Calu3 (cell line): ENCODE measurements at regions of chr18 and their contacts with region 1.

Region 1: GRCh38 chr18:5339202-5339834 is 43.8 kb upstream of the ZBTB14 start:
- DNase-seq: no peak
- H3K4me3 Mint-ChIP-seq: no peak overlapping the region
- H3K27ac Mint-ChIP-seq: no peak overlapping the region
- H3K4me1 Mint-ChIP-seq: no peaks in the 10 kb centered on the region
- H3K27me3 Mint-ChIP-seq: no peaks in the 10 kb centered on the region
- CTCF ChIP-seq: no peak

Region 2: DNA sequence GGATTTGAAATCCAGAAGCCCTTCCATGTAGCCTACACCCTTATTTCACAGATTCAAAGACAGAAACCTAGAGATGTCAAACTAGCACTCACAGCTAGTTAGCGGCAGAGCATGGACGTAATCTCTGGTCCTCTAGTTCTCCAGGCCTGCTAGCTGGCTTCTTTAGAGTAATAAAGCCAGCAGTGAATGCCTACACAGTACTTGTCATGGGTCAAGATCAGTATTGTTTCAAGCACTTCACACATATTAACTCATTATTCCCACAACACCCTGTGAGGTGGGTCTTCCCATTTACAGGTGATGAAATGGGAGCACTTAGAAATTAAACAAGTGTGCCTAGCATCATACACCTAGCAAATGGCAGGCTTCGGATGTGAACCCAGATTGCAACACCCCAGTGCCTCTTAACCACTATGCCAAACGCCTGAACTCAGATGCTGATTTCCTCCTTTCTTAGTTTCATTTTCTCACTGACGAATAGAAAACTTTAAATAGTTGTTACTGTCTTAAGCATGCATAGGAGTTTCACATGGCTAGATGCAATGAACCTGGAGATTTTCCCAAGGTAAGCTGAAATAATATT is 29.3 kb before region 1 on chr18:
- CTCF ChIA-PET with region 1: no interaction called
- intact Hi-C with region 1: loop called (anchors 1 kb)
- DNase-seq: no peak
- H3K4me3 Mint-ChIP-seq: no peak overlapping the region
- H3K27ac Mint-ChIP-seq: no peak overlapping the region
- H3K4me1 Mint-ChIP-seq: no peaks in the 10 kb centered on the region
- H3K27me3 Mint-ChIP-seq: no peaks in the 10 kb centered on the region
- CTCF ChIP-seq: no peak